ENCODE measurements at regions of chr21 and their contacts with region 1.

Region 1: GRCh38 chr21:35051287-35051818 is 2.3 kb upstream of the RUNX1 start:
- DNase-seq: peak; percentile 22
- H3K27ac ChIP-seq: no peak overlapping the region
- CTCF ChIP-seq: no peak

Region 2: GRCh38 chr21:35084869-35085268 is 33.5 kb after region 1 on chr21:
- CTCF ChIA-PET with region 1: no interaction called
- POLR2A ChIA-PET with region 1: interaction called, 11 read pairs
- DNase-seq: peak; percentile 69
- H3K27ac ChIP-seq: no peak overlapping the region
- CTCF ChIP-seq: no peak

Measured in RWPE1 (cell line).